Activated CD4-positive, alpha-beta memory T cell treated with anti-CD3 and anti-CD28 coated beads for 36 hours (primary cell): ENCODE measurements at regions of chr7 and their contacts with region 1.

Region 1: DNA sequence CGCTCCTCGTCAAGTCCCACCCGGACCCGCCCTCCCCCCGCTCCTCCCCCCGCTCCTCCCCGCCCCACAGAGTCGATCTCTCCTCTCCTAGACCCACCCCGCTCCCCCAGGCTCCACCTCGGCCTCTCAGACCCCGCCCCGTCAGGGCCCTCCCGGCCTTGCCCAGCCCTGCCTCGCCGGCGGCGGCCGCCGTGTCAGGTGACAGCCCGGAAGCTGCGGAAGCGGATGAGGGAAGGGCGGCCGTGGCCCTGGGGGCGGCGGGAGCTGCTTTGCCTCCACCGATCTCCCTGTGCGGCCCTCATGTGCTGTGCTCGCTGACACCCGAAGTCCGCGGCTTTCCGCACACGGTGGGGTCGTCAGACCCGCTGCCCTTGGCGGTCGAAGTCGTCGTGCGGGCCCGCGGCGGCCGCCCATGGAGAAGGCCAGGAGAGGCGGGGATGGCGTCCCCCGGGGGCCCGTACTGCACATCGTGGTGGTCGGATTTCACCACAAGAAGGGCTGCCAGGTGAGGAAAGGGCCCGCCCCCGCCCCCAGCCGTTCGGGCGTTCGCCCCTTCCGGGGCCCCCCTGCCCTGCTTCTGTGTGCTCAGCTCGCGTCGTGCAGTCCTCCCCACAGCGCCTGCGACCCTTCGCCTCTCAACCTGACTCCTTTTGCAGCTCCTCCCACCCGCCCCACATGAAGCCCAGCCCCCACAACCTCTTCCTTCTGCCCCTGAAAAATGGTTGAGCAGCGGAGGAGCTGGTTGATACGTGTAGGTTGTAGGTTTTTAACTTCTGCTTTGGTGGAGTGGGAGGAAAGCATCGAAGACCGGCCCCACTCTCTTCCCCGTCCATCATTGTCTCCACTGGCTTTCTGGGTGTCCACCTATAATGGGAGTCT is at the start of gene AVL9:
- DNase-seq: peak; percentile 100
- H3K4me3 Mint-ChIP-seq: peak within 1 kb of the TSS; percentile 86
- H3K27ac Mint-ChIP-seq: peak within 1 kb of the TSS; percentile 93
- H3K4me1 Mint-ChIP-seq: peaks cover 36% of the 10 kb centered on the region
- H3K27me3 Mint-ChIP-seq: no peaks in the 10 kb centered on the region
- total RNA-seq, gene AVL9: 39.6 to 44.2 TPM

Region 2: GRCh38 chr7:30504347-30505173 is 1991.0 kb before region 1 on chr7 and contains the start of gene GGCT:
- CTCF ChIA-PET with region 1: no interaction called
- POLR2A ChIA-PET with region 1: no interaction called
- intact Hi-C with region 1: loop called (anchors 10 kb)
- DNase-seq: peak; percentile 99
- H3K4me3 Mint-ChIP-seq: peak within 1 kb of the TSS; percentile 77
- H3K27ac Mint-ChIP-seq: peak within 1 kb of the TSS; percentile 79
- H3K4me1 Mint-ChIP-seq: peaks cover 38% of the 10 kb centered on the region
- H3K27me3 Mint-ChIP-seq: no peaks in the 10 kb centered on the region
- total RNA-seq, gene GGCT: 60.5 to 68.0 TPM

Region 3: GRCh38 chr7:32506266-32507054 is 10.9 kb after region 1 on chr7:
- CTCF ChIA-PET with region 1: interaction called, 3 read pairs
- POLR2A ChIA-PET with region 1: interaction called, 14 read pairs
- intact Hi-C with region 1: loop called (anchors 1 kb)
- DNase-seq: peak; percentile 50
- H3K4me3 Mint-ChIP-seq: no peak overlapping the region
- H3K27ac Mint-ChIP-seq: peak overlapping the region; percentile 52
- H3K4me1 Mint-ChIP-seq: peaks cover 56% of the 10 kb centered on the region
- H3K27me3 Mint-ChIP-seq: no peaks in the 10 kb centered on the region

Region 4: DNA sequence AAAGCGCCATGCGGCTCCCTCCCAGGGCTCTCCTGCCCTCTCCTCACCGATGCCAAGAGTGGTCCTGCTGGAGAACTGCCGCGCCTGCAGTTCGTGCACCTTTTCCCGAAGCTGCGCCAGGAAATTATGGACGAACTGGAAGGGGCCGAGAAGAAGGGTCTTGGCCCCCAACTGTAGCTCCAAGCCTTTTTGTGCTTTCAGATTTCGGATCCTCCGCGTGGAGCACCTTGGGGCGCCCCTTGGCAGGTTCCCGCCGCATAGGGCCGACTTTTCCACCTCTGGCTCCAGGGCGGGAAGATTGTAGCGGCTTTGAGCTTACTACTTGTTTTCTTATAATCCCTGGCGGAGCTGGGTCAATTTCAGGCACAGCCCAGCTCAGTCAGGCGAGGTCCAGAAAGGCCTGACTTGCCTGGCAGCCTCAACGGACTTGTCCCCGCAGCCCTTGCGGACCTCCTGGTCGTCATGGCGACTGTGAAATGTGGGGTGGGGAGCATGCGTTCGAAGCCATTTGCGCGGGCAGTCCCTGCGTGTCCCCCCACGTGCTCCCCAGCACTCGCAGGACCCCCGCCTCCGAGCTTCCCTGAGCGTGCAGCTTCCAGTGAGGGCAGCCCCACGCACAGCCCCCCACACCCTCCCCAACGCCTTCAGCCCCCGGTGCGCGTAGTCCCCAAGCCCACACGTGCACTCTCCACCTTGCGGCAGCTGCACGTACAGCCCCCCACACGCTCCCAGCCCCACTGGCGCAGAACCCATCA is 266.1 kb after region 1 on chr7:
- CTCF ChIA-PET with region 1: no interaction called
- POLR2A ChIA-PET with region 1: no interaction called
- intact Hi-C with region 1: loop called (anchors 10 kb)
- DNase-seq: no peak
- H3K4me3 Mint-ChIP-seq: no peak overlapping the region
- H3K27ac Mint-ChIP-seq: no peak overlapping the region
- H3K4me1 Mint-ChIP-seq: peaks cover 8% of the 10 kb centered on the region
- H3K27me3 Mint-ChIP-seq: peaks cover 38% of the 10 kb centered on the region

Region 5: GRCh38 chr7:32942786-32943653 is 447.5 kb after region 1 on chr7:
- CTCF ChIA-PET with region 1: no interaction called
- POLR2A ChIA-PET with region 1: no interaction called
- intact Hi-C with region 1: loop called (anchors 5 kb)
- DNase-seq: peak; percentile 82
- H3K4me3 Mint-ChIP-seq: peak overlapping the region; percentile 72
- H3K27ac Mint-ChIP-seq: no peak overlapping the region
- H3K4me1 Mint-ChIP-seq: peaks cover 10% of the 10 kb centered on the region
- H3K27me3 Mint-ChIP-seq: peaks cover 3% of the 10 kb centered on the region